HepG2 (cell line): ENCODE measurements at regions of chr11 and their contacts with region 1.

Region 1: GRCh38 chr11:27201454-27202236 is 161.0 kb downstream of the BBOX1 start:
- DNase-seq: peak; percentile 96
- ATAC-seq: peak; percentile 93
- H3K4me3 ChIP-seq: peak overlapping the region in 2 of 3 experiments; percentile 27 to 51; a peak in 4 of 6 replicates
- H3K27ac ChIP-seq: peak overlapping the region; percentile 46
- H3K4me1 ChIP-seq: peaks cover 47% of the 10 kb centered on the region
- H3K27me3 ChIP-seq: no peaks in the 10 kb centered on the region
- CTCF ChIP-seq: no peak
- EP300 ChIP-seq: peak in 1 of 2 experiments; percentile 77; a peak in 2 of 4 replicates
- POLR2A ChIP-seq: no peak
- RAD21 ChIP-seq: no peak

Region 2: DNA sequence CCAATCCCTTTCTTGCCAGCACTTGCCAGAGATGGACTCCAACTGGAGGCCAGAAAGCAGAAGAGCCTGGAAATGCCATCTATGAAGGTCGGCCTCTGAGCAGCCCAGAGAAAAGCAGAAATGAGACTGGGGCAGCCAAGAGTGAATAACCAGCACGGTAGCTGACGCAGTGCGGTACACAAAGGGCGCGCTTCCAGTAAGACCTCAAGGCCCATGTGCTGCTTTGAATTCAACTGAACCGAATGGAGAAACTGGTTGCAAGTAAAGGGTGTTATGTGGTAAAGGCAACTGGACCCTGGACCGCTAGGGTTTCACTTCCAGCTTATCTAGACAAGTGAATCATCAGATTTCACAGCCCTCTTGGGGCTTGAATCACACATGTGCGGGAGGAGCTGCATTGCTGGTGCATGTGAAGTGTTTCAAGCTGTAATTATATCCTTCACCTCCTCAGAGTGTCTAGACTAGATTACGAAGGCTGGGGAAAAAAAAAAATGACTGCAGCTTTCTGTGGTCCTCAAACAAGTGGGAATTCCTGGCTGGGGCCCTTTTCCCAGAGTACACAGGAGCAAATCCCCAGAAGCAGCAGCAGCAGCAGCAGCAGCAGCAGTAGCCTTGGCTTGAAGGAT is 32.5 kb after region 1 on chr11:
- CTCF ChIA-PET with region 1: no interaction called
- POLR2A ChIA-PET with region 1: no interaction called
- in situ Hi-C with region 1: no loop called
- intact Hi-C with region 1: loop called (anchors 1 kb)
- DNase-seq: peak; percentile 82
- ATAC-seq: peak; percentile 96
- H3K4me3 ChIP-seq: peak overlapping the region in 2 of 3 experiments; percentile 7 to 45; a peak in 3 of 6 replicates
- H3K27ac ChIP-seq: no peak overlapping the region
- H3K4me1 ChIP-seq: peaks cover 23% of the 10 kb centered on the region
- H3K27me3 ChIP-seq: peaks cover 0 to under 1% of the 10 kb centered on the region in 2 experiments; a peak in 1 of 5 replicates
- CTCF ChIP-seq: peak; percentile 46
- EP300 ChIP-seq: no peak
- POLR2A ChIP-seq: no peak
- RAD21 ChIP-seq: no peak

Region 3: GRCh38 chr11:27291302-27291889 is 89.8 kb after region 1 on chr11:
- CTCF ChIA-PET with region 1: interaction called, 3 read pairs
- POLR2A ChIA-PET with region 1: no interaction called
- in situ Hi-C with region 1: loop called (anchors 5 kb)
- intact Hi-C with region 1: loop called (anchors 1 kb)
- DNase-seq: no peak
- ATAC-seq: no peak
- H3K4me3 ChIP-seq: no peak overlapping the region
- H3K27ac ChIP-seq: no peak overlapping the region
- H3K4me1 ChIP-seq: peaks cover 50% of the 10 kb centered on the region
- H3K27me3 ChIP-seq: no peaks in the 10 kb centered on the region
- CTCF ChIP-seq: no peak
- EP300 ChIP-seq: no peak
- POLR2A ChIP-seq: no peak
- RAD21 ChIP-seq: no peak

Region 4: DNA sequence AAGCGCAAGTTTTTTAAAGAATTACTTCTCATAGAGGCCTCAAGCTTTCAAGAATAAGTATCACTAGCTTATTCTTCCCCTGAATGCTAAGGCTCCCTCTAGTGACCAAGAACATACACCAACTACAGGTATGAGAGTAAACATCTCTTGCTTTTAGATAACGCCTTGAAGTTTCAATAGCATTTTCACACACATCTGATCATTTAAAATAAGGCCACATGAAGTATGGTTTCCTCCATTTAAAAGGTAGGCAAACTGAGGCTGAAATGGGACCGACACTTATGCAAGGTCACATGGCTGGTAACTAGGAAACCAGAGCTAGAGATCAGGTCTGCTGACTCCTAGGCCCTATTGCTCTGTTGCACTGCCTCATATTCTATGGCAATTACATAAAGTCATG is 94.9 kb after region 1 on chr11:
- CTCF ChIA-PET with region 1: interaction called, 3 read pairs
- POLR2A ChIA-PET with region 1: no interaction called
- in situ Hi-C with region 1: loop called (anchors 5 kb)
- intact Hi-C with region 1: loop called (anchors 1 kb)
- DNase-seq: peak; percentile 44
- ATAC-seq: peak; percentile 74
- H3K4me3 ChIP-seq: no peak overlapping the region
- H3K27ac ChIP-seq: no peak overlapping the region
- H3K4me1 ChIP-seq: peaks cover 51% of the 10 kb centered on the region
- H3K27me3 ChIP-seq: no peaks in the 10 kb centered on the region
- CTCF ChIP-seq: peak; percentile 72
- EP300 ChIP-seq: no peak
- POLR2A ChIP-seq: no peak
- RAD21 ChIP-seq: peak; percentile 50

Region 5: GRCh38 chr11:27362749-27363575 is 161.3 kb after region 1 on chr11 and contains the start of gene CCDC34:
- CTCF ChIA-PET with region 1: no interaction called
- POLR2A ChIA-PET with region 1: no interaction called
- in situ Hi-C with region 1: no loop called
- intact Hi-C with region 1: loop called (anchors 5 kb)
- DNase-seq: peak; percentile 87
- ATAC-seq: peak; percentile 96
- H3K4me3 ChIP-seq: peak within 1 kb of the TSS; percentile 59 to 88 (median 66)
- H3K27ac ChIP-seq: peak within 1 kb of the TSS; percentile 76
- H3K4me1 ChIP-seq: peaks cover 55% of the 10 kb centered on the region
- H3K27me3 ChIP-seq: no peaks in the 10 kb centered on the region; a peak in 1 of 5 replicates
- CTCF ChIP-seq: peak; percentile 42
- EP300 ChIP-seq: no peak
- POLR2A ChIP-seq: peak; percentile 51 to 69; a peak in 3 of 4 replicates
- RAD21 ChIP-seq: peak; percentile 84
- total RNA-seq, gene CCDC34: 34.3 and 37.9 TPM in 2 replicates

Region 6: DNA sequence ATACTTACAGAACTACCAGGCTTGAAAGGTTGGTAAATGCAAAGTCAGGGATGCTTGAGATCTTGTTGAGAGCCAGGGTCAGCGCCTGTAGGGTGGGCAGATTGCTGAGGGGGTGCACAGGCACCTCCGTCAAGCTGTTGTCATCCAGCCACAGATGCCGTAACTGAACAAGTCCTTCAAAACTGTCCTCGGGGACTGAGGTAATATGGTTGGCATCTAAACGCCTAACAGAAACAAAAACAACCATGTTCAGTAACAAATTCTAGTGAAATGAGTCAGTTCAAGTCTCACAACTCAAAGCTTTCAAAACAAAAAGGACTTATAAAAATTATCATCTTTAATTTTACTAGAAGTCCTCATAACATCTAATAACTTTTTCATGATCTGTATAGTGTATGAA is 183.6 kb after region 1 on chr11:
- CTCF ChIA-PET with region 1: no interaction called
- POLR2A ChIA-PET with region 1: no interaction called
- in situ Hi-C with region 1: no loop called
- intact Hi-C with region 1: no loop called
- DNase-seq: no peak
- ATAC-seq: no peak
- H3K4me3 ChIP-seq: no peak overlapping the region
- H3K27ac ChIP-seq: no peak overlapping the region
- H3K4me1 ChIP-seq: peaks cover 41% of the 10 kb centered on the region
- H3K27me3 ChIP-seq: no peaks in the 10 kb centered on the region
- CTCF ChIP-seq: no peak
- EP300 ChIP-seq: no peak
- POLR2A ChIP-seq: no peak
- RAD21 ChIP-seq: no peak

Region 7: GRCh38 chr11:27485930-27486773 is 284.5 kb after region 1 on chr11:
- CTCF ChIA-PET with region 1: no interaction called
- POLR2A ChIA-PET with region 1: no interaction called
- in situ Hi-C with region 1: no loop called
- intact Hi-C with region 1: loop called (anchors 2 kb)
- DNase-seq: peak; percentile 54
- ATAC-seq: peak; percentile 54
- H3K4me3 ChIP-seq: no peak overlapping the region
- H3K27ac ChIP-seq: no peak overlapping the region
- H3K4me1 ChIP-seq: peaks cover 6% of the 10 kb centered on the region; the same call in 1 of the 2 replicates
- H3K27me3 ChIP-seq: no peaks in the 10 kb centered on the region; a peak in 1 of 5 replicates
- CTCF ChIP-seq: peak; percentile 75
- EP300 ChIP-seq: no peak
- POLR2A ChIP-seq: no peak
- RAD21 ChIP-seq: peak; percentile 79